ENCODE measurements at regions of chr2 and their contacts with region 1.

Region 1: GRCh38 chr2:112481050-112481527 is 867 bp upstream of the TTL start:
- DNase-seq: peak; percentile 88
- H3K4me3 Mint-ChIP-seq: peak overlapping the region; percentile 82
- H3K27ac Mint-ChIP-seq: peak overlapping the region; percentile 84
- H3K4me1 Mint-ChIP-seq: peaks cover 29% of the 10 kb centered on the region
- H3K27me3 Mint-ChIP-seq: no peaks in the 10 kb centered on the region

Region 2: GRCh38 chr2:112465382-112465781 is 15.7 kb before region 1 on chr2:
- CTCF ChIA-PET with region 1: interaction called, 13 read pairs
- POLR2A ChIA-PET with region 1: interaction called, 3 read pairs
- DNase-seq: no peak
- H3K4me3 Mint-ChIP-seq: no peak overlapping the region
- H3K27ac Mint-ChIP-seq: no peak overlapping the region
- H3K4me1 Mint-ChIP-seq: no peaks in the 10 kb centered on the region
- H3K27me3 Mint-ChIP-seq: peaks cover 34% of the 10 kb centered on the region

Region 3: DNA sequence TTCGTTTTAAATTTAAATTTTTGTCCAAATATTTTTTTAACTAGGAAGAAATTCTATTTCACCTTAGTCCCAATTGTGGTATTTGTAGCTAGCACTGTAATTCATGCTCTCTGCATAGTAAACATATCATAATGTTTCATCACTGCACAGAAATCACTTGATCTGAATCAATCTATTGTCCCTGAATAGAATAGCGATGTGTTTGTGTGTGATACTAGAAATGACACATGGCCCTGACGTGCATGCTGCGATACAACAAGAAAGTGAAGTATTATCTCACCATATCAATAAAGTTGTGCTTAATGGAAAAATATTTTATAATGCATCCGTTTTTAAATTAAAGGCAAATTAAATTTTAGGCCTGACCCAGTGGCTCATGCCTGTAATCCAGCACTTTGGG is 10.9 kb after region 1 on chr2:
- CTCF ChIA-PET with region 1: interaction called, 13 read pairs
- POLR2A ChIA-PET with region 1: interaction called, 5 read pairs
- DNase-seq: no peak
- H3K4me3 Mint-ChIP-seq: no peak overlapping the region
- H3K27ac Mint-ChIP-seq: no peak overlapping the region
- H3K4me1 Mint-ChIP-seq: peaks cover 14% of the 10 kb centered on the region
- H3K27me3 Mint-ChIP-seq: no peaks in the 10 kb centered on the region

Region 4: GRCh38 chr2:112542123-112542983 is 61.3 kb after region 1 on chr2 and contains the start of gene POLR1B:
- CTCF ChIA-PET with region 1: interaction called, 15 read pairs
- POLR2A ChIA-PET with region 1: interaction called, 14 read pairs
- DNase-seq: peak; percentile 80
- H3K4me3 Mint-ChIP-seq: no peak within 1 kb of the TSS
- H3K27ac Mint-ChIP-seq: no peak within 1 kb of the TSS
- H3K4me1 Mint-ChIP-seq: peaks cover 27% of the 10 kb centered on the region
- H3K27me3 Mint-ChIP-seq: no peaks in the 10 kb centered on the region
- total RNA-seq, gene POLR1B: 23.5 to 29.0 TPM

Region 5: DNA sequence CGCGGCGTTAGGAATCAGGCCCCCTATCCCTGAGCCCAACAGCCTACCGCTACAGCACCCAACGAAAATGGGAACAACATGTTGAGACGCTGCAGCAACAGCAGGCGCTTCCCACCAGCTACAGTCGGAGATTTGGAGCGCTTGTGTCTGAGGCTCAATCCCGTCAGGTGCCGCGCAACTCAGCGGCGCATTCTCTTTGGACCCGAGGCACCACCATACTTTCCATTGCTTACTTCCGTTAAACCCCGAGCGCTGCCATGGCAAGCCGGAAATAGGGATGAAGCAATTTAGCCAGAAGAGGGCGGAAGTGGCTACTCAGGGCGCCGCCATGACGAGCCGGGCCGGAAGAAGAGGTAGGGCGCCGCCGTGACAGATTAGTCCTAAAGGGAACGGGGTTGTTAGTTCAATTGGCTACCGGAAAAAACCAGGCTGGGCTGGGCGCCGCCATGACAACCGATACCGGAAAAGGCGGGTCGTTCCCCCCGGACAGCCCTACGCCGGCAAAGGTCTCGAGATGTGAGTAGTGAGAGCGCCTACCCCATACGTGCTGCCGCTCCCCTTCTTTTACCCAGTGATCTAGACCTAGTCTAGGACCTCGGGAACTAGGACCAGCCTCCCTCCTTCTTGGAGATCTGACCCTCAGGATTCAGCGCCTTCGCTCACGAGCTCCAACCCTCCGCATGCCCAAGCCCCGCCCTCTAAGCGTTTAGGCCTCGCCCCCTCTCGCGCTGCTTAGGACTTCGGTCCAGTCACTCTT is 103.2 kb after region 1 on chr2 and contains the start of gene CHCHD5:
- CTCF ChIA-PET with region 1: interaction called, 19 read pairs
- POLR2A ChIA-PET with region 1: interaction called, 8 read pairs
- DNase-seq: peak; percentile 97
- H3K4me3 Mint-ChIP-seq: peak within 1 kb of the TSS; percentile 97
- H3K27ac Mint-ChIP-seq: peak within 1 kb of the TSS; percentile 95
- H3K4me1 Mint-ChIP-seq: peaks cover 47% of the 10 kb centered on the region
- H3K27me3 Mint-ChIP-seq: no peaks in the 10 kb centered on the region
- total RNA-seq, gene CHCHD5: 40.0 to 47.5 TPM

Region 6: DNA sequence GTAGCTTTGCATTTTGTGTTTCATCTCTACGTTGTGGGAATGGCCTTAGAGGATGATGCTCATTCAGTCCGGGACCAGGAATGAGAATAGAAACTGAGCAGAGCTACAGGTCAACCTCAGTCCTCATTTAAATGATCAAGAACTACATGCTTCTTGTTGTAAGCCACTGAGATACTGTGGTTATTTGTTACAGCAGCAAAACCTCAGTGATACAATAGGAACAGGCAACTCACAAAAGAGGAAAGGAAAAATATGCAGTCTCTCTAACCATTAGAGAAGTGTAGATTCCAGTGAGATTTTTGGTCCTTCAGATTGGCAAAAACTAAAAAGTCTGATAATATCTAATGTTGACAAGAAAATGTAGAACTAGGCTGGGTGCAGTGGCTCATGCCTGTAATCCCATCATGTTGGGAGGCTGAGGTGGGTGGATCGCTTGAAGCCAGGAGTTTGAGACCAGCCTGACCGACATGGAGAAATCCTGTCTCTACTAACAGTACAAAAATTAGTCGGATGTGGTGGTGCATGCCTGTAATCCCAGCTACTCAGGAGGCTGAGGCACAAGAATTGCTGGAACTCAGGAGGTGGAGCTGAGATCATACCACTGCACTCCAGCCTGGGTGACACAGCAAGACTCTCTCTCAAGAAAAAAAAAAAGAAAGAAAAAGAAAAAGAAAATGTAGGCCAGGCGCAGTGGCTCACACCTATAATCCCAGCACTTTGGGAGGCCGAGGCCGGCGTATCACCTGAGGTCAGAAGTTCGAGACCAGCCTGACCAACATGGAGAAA is 116.6 kb after region 1 on chr2:
- CTCF ChIA-PET with region 1: no interaction called
- POLR2A ChIA-PET with region 1: no interaction called
- DNase-seq: no peak
- H3K4me3 Mint-ChIP-seq: no peak overlapping the region
- H3K27ac Mint-ChIP-seq: no peak overlapping the region
- H3K4me1 Mint-ChIP-seq: peaks cover 7% of the 10 kb centered on the region
- H3K27me3 Mint-ChIP-seq: no peaks in the 10 kb centered on the region